Activated CD4-positive, alpha-beta T cell treated with anti-CD3 and anti-CD28 coated beads, Interleukin-2, amount 10 ng/mL, durations not matched to agents 24 days and 14 days (primary cell): ENCODE measurements at regions of chr7 and their contacts with region 1.

Region 1: GRCh38 chr7:35985126-35985754 is 167.8 kb upstream of the EEPD1 start:
- DNase-seq: peak; percentile 90
- H3K4me3 Mint-ChIP-seq: no peak overlapping the region
- H3K27ac Mint-ChIP-seq: no peak overlapping the region
- H3K4me1 Mint-ChIP-seq: no peaks in the 10 kb centered on the region
- H3K27me3 Mint-ChIP-seq: peaks cover 3% of the 10 kb centered on the region

Region 2: DNA sequence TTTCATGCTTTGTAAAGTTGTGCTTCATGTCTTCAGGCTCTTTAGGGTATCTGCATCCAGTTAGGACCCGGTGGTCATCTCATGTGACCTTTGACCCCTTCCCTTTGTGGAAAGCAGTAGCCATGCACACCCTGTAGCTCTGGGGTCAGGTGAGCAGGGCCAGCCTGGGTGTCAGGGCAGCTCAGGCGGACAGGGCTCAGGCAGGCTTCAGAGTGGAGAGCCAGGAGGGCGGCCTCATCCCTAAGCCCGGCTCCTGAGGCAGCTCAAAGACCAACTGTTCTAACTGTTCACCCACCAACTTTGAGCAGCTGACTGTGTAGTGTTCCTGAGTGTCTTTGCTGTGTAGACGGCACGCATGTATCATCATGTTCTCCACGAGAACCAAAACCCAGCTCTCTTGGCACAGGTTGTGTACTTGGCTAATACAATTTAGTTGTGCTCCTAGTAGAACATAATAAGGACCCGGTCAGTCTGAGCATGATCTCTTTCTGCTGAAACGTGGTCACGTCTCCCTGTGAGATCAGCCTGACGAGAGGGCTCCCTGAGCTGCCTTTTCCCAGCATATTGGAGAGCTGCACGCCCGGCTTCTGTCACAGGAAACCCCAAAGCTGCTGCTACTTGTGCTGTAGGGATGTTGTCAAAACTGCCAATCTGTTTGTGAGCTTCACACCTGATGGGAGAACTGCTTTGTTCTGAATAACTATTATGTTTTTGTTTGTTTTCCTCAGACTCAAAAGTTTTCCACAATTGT is 197.8 kb after region 1 on chr7:
- intact Hi-C with region 1: loop called (anchors 10 kb)
- DNase-seq: no peak
- H3K4me3 Mint-ChIP-seq: no peak overlapping the region
- H3K27ac Mint-ChIP-seq: no peak overlapping the region
- H3K4me1 Mint-ChIP-seq: no peaks in the 10 kb centered on the region
- H3K27me3 Mint-ChIP-seq: peaks cover 2% of the 10 kb centered on the region

Region 3: GRCh38 chr7:36291387-36292316 is 306.4 kb after region 1 on chr7:
- intact Hi-C with region 1: loop called (anchors 1 kb)
- DNase-seq: peak; percentile 91
- H3K4me3 Mint-ChIP-seq: peak overlapping the region; percentile 77
- H3K27ac Mint-ChIP-seq: no peak overlapping the region
- H3K4me1 Mint-ChIP-seq: peaks cover 40% of the 10 kb centered on the region
- H3K27me3 Mint-ChIP-seq: no peaks in the 10 kb centered on the region